ENCODE measurements at regions of chr1 and their contacts with region 1.

Region 1: DNA sequence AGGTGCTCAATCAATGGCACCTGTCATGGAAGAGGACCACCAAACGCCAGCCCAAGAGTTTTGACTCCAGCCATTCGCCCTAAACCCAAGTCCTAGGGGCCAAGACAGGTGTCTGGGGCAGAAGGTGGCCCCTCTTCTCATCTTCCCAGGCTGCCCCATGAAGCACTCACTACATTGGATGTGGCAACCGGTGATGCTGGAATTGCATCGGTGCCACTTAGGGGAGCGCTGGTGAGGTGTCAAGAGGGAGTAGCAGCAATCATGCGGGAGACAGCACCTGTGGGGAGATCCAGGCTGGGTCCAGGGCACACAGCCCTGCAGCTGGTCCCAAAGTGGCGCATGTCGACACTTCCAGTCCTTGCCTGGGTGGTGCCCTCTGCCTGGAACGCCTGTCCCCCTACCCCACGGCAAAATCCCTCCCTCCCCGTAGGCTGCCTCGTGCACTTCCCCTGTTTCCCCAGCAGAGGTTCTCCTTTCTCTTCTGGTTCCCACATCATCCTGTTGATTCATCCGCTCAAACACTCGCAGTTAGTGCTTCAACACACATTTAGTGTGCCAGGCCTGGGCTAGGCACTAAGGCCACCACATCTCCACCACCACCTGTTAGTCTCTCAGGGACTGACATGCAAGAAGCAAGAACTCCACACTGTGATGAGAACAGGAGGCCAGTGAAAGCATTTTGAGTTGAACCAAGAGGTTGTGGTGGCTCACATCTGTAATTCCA is 18.5 kb downstream of the PLA2G2D start:
- DNase-seq: peak; percentile 75
- CTCF ChIP-seq: peak; percentile 88

Region 2: DNA sequence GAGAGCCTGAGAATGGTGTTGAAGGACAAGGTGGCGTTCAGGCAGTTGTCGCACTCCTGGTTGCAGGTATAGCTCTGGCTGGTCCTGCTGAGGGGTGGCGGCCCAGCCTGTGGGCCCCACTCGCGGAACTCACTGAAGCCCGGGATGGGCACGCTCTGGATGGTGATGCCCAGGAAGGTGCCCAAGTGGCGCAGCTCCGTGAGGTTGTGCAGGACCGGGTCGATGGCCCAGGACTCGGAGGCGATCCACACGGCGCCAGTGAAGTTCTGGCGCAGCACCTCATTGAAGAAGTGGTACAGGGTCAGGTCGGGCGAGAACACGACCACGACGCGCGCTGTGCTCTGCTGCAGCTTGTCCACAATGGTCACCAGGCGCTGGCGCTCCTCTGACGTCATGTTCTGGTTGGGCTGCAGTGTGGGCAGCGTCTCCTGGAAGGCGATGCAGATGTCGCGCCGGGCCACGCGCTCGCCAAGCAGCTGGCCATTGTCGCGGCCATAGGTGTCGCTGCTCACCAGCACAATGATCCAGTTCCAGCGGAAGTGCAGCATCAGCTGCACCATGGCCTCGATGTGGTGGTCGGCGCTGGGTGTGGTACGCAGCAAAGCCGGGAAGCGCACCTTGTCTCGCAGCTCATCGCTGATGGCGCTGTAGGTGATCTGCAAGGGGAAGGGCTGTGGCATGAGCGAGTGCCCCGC is 1246.3 kb before region 1 on chr1:
- in situ Hi-C with region 1: no loop called
- DNase-seq: no peak
- CTCF ChIP-seq: no peak

Region 3: GRCh38 chr1:20151906-20152598 is 51.3 kb after region 1 on chr1:
- in situ Hi-C with region 1: loop called (anchors 10 kb)
- DNase-seq: peak; percentile 91
- CTCF ChIP-seq: peak; percentile 90

Measured in GM13977 (cell line).